Posterior vena cava (tissue), 2 donors: ENCODE measurements at regions of chr9 and their contacts with region 1.

Region 1: DNA sequence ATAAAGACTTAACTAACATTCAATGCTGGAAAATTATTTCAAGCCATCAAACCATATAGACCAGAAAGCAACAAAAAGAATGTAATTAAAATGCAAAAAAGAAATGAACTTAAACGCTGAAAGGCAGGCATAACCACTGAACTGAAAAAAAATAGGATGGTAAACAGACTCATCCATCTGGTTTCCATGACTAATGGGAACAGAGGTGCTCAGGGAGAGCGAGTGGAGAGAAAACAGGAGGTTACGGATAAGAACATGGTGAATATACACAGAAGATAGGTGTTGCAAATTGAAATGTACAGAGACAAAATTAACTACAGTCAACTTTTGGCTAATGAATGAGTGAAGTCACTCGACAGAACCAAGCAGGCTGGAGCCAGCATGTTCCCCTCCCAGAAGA is 43.5 kb upstream of the RNF38 start:
- DNase-seq: no peak

Region 2: GRCh38 chr9:35981699-35982098 is 461.9 kb before region 1 on chr9:
- intact Hi-C with region 1: loop called in 1 of 2 experiments (anchors 5 kb)
- DNase-seq: no peak

Region 3: DNA sequence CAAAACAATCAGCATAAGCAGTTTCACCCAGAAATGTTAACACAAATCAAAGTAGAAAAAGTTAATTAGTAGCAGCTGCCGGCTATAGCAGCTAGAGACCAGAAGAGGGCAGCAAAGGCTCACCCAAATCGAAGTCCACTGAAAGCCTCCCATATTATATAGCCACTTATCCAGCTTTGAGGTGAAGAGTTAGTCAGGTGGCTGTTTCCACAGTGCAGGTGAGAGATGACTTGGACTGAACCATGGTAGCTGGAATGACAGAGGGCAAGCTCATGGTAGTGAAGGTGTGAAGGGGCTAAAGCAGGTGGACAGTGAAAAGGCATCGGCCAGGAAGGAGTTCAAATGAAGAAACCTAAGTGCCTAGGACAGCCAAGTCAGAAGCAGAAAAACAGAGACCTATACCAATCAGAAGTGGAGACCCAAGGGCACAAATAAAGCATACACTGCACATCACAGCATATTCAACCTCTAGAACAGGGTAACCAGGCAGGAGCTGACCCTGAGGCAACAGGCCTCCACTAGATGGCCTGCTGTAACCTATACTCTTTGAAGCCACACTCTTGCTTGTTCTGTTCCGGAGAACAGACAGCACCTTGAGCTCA is 36.4 kb before region 1 on chr9:
- intact Hi-C with region 1: loop called in 1 of 2 experiments (anchors 2 kb)
- DNase-seq: no peak

Region 4: DNA sequence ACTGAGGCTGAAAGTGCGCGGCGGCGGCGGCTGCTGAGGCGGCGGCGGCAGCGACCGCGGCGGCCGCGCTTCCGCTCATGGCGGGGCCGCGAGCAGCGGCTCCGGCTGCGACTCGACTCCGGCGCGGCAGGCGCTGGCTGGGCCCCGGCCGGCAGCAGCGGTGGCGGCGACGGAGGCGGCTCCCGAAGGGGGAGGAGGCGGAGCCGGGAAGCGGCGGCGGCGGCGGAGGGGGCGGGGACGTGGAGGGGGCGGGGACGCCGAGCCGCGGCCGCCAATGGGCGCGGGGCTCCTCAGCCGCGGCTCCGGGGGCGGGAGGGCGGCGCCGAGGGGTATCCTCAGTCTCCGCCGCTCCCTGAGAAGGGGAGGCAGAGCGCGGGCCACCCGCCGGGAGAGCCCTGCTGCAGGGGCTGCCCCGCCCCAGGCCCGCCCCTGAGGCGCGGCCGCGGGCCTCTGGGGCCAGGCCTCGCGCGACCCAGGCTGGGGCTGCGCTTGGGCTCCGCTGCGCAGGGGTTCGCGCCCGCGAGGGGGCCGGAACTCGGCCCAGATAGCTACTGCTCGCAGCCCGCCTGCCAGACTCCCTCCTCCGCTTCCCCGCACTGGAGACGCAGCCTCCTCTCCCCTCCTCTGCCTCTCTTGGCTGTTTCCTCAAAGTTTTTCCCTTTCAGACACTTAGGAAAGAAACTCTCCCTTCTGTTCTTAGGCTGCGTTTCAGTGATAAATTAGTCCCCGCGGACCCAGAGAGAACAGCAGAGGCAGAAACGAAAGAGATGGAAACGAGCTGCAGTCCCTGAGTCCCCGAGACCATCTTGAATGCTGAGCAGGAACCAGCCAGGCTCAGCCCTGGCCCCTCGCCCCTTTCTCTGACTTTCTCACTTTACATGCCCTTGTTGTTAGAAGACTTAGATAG is 44.2 kb after region 1 on chr9:
- intact Hi-C with region 1: loop called in 1 of 2 experiments (anchors 1 kb)
- DNase-seq: peak; percentile 97